ENCODE measurements at regions of chr15 and their contacts with region 1.

Region 1: GRCh38 chr15:45587095-45587860 is at the start of gene BLOC1S6:
- DNase-seq: peak; percentile 90
- ATAC-seq: peak; percentile 85
- H3K4me3 ChIP-seq: peak within 1 kb of the TSS; percentile 67
- H3K27ac ChIP-seq: peak within 1 kb of the TSS; percentile 92
- H3K4me1 ChIP-seq: peaks cover 3% of the 10 kb centered on the region; the same call in 1 of the 2 replicates
- H3K27me3 ChIP-seq: no peaks in the 10 kb centered on the region
- CTCF ChIP-seq: no peak
- POLR2A ChIP-seq: peak; percentile 86
- RAD21 ChIP-seq: no peak
- total RNA-seq, gene BLOC1S6: 40.9 and 78.3 TPM in 2 replicates

Region 2: DNA sequence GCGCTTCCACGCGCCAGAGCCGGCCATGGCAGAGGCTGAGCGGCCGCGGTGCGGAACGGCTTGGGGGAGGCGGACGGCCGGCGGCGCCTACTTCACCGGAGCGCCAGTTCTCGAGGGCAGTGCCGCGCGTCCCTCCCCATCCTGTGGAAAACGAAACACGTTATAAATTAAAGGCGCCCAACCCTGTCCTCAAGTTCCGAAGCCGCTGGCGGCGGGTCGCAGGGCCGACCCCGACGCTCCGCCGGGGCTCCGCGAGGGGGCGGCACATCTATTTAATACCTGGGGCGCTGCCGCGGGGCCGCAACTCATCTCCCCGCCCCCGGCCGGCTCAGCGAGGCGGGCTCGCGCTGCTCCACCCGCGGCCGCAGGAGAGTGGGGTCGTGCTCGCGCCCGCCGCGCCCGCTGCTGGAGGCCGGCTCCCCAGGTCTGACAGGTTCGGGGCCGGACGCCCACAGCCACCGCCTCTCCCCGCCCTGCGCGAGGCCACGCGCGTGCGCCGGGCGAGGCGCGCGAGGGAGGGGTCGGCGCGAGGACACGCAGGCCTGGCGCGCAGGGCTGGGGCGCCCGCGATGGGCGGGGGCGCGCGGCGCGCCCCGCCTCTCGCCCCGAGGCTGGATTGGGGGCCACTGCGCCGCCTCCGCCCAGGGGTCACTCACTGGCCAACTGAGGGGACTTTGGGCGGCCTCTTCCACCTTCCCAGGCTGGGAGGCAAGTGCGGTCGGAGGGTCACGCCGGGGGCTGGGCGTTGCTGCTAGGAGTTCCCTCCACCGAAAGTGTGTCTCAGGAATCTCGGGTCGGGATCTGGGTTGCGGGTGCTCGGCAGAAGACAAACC is 64.7 kb before region 1 on chr15 and contains the start of gene SLC30A4:
- CTCF ChIA-PET with region 1: interaction called, 3 read pairs
- POLR2A ChIA-PET with region 1: no interaction called
- dilution Hi-C with region 1: no loop called
- in situ Hi-C with region 1: no loop called
- intact Hi-C with region 1: loop called (anchors 2 kb)
- DNase-seq: peak; percentile 42
- ATAC-seq: peak; percentile 97
- H3K4me3 ChIP-seq: peak within 1 kb of the TSS; percentile 83
- H3K27ac ChIP-seq: peak within 1 kb of the TSS; percentile 14
- H3K4me1 ChIP-seq: no peaks in the 10 kb centered on the region
- H3K27me3 ChIP-seq: no peaks in the 10 kb centered on the region
- CTCF ChIP-seq: peak; percentile 36
- POLR2A ChIP-seq: no peak
- RAD21 ChIP-seq: no peak
- total RNA-seq, gene SLC30A4: 5.6 and 7.5 TPM in 2 replicates

Measured in IMR-90 (cell line).